OCI-LY7 (cell line): ENCODE measurements at regions of chr5 and their contacts with region 1.

Region 1: DNA sequence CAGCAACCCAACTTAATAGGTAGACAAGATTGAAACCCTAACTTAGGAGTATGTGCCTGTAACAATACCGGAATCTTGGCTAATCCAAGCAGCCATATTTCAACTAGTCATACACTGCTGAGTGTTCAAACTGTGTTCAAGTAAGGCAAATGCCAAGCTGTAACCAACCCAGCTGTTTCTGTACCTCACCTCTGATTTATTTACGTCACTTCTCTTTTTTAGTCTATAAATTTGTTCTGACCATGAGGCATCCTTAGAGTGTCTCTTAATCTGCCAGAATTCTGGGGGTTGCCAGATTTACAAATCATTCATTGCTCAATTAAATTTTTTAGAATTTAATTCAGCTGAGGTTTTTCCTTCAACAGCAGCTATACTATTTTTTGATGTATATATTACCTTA is 723.2 kb downstream of the CDH18 start:
- DNase-seq: peak; percentile 48
- H3K4me3 ChIP-seq: peak overlapping the region; percentile 8
- H3K27ac ChIP-seq: peak overlapping the region; percentile 90
- H3K4me1 ChIP-seq: peaks cover 69% of the 10 kb centered on the region
- CTCF ChIP-seq: no peak

Region 2: DNA sequence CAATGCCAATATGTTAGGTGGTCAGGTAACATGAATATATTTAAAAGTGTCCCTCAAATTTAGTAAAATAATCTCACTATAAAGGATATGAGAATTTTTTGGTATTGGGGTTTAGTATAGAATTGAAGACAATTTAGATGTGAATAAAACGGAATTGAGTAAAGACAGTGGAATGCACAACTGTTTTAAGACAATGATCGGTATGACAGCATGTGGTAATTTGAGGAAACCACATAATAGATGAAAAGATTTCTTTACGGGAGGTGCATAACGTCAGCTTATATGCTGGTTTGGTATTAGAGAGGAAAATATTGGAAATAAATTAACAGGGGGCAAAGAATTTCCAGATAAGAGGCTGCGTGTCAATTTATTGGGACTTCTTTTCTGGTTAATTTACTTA is 320.1 kb before region 1 on chr5:
- CTCF ChIA-PET with region 1: no interaction called
- POLR2A ChIA-PET with region 1: no interaction called
- intact Hi-C with region 1: no loop called
- DNase-seq: no peak
- H3K4me3 ChIP-seq: no peak overlapping the region
- H3K27ac ChIP-seq: no peak overlapping the region
- H3K4me1 ChIP-seq: no peaks in the 10 kb centered on the region
- CTCF ChIP-seq: no peak

Region 3: DNA sequence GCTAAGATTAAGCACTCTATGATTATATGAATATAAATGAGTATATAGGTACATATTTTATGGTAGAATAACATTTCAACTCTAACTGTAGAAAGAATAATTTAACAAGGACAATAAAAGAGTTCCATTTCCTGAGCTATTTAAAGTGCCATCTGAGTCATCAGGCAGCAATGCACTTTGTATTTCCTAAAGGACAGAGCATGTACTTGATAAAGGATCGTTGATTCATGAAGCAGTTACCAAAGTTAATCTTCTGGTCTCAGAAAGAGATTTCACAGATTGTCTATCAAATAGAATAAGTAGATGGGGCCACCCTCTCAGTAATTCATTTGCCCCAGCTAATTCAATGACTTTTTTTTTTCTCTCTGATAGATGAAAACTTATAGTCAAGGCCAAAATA is 24.7 kb before region 1 on chr5:
- CTCF ChIA-PET with region 1: no interaction called
- POLR2A ChIA-PET with region 1: interaction called, 15 read pairs
- intact Hi-C with region 1: no loop called
- DNase-seq: no peak
- H3K4me3 ChIP-seq: no peak overlapping the region
- H3K27ac ChIP-seq: no peak overlapping the region
- H3K4me1 ChIP-seq: peaks cover 17% of the 10 kb centered on the region
- CTCF ChIP-seq: no peak

Region 4: DNA sequence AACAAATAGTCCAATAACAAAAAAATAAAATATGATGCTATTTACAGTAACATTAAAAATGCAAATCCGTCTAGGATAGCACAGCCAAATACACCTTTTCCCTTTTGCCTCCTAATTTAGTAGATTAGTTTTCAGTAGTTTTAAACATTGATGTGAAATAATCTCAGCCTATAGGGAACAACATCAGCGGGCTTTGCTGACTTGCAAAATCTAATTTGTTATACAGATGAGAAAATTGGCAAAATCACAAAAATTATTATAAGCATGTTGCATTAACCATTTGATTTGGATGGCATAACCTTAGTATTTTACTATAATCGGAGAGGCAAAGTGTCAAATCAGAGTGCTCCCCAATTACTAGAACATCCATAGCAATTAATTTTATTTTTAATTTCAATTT is 159.7 kb after region 1 on chr5:
- CTCF ChIA-PET with region 1: no interaction called
- POLR2A ChIA-PET with region 1: no interaction called
- intact Hi-C with region 1: no loop called
- DNase-seq: no peak
- H3K4me3 ChIP-seq: no peak overlapping the region
- H3K27ac ChIP-seq: no peak overlapping the region
- H3K4me1 ChIP-seq: no peaks in the 10 kb centered on the region
- CTCF ChIP-seq: no peak